ENCODE measurements at regions of chrX and their contacts with region 1.

Region 1: GRCh38 chrX:133670383-133670782 is 255.1 kb upstream of the GPC4 start:
- DNase-seq: no peak
- ATAC-seq: no peak; the same call in 1 of the 2 replicates
- H3K4me3 Mint-ChIP-seq: no peak overlapping the region
- H3K27ac Mint-ChIP-seq: no peak overlapping the region
- H3K4me1 Mint-ChIP-seq: peaks cover 57% of the 10 kb centered on the region
- H3K27me3 Mint-ChIP-seq: no peaks in the 10 kb centered on the region
- CTCF ChIP-seq: peak; percentile 36; the same call in 1 of the 2 replicates

Region 2: DNA sequence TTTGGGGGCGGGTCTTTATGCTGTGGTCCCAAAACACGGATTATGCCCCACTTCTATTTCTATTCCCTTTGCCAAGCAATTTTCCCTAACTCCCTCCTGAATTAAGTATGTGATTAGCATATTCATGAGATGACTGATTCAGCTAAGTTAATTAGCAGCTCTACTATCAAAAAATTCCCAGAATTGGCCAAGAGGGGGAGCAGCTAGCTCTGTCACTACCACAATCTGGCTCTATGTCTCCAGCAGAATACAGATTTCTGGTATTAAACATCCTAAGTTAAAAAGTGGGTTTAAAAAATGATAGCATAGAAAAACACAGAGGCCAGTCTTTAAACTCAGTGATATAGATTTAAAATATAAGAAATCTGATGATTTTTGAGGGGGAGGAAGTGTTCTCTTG is 335.4 kb before region 1 on chrX:
- CTCF ChIA-PET with region 1: interaction called, 10 read pairs
- POLR2A ChIA-PET with region 1: no interaction called
- DNase-seq: no peak
- ATAC-seq: no peak
- H3K4me3 Mint-ChIP-seq: no peak overlapping the region
- H3K27ac Mint-ChIP-seq: no peak overlapping the region
- H3K4me1 Mint-ChIP-seq: peaks cover 48% of the 10 kb centered on the region
- H3K27me3 Mint-ChIP-seq: no peaks in the 10 kb centered on the region
- CTCF ChIP-seq: no peak

Region 3: GRCh38 chrX:133638285-133638684 is 32.1 kb before region 1 on chrX:
- CTCF ChIA-PET with region 1: no interaction called
- POLR2A ChIA-PET with region 1: no interaction called
- DNase-seq: no peak
- ATAC-seq: no peak
- H3K4me3 Mint-ChIP-seq: no peak overlapping the region
- H3K27ac Mint-ChIP-seq: no peak overlapping the region
- H3K4me1 Mint-ChIP-seq: peaks cover 65% of the 10 kb centered on the region
- H3K27me3 Mint-ChIP-seq: no peaks in the 10 kb centered on the region
- CTCF ChIP-seq: no peak